ENCODE measurements at regions of chr16 and their contacts with region 1.

Region 1: DNA sequence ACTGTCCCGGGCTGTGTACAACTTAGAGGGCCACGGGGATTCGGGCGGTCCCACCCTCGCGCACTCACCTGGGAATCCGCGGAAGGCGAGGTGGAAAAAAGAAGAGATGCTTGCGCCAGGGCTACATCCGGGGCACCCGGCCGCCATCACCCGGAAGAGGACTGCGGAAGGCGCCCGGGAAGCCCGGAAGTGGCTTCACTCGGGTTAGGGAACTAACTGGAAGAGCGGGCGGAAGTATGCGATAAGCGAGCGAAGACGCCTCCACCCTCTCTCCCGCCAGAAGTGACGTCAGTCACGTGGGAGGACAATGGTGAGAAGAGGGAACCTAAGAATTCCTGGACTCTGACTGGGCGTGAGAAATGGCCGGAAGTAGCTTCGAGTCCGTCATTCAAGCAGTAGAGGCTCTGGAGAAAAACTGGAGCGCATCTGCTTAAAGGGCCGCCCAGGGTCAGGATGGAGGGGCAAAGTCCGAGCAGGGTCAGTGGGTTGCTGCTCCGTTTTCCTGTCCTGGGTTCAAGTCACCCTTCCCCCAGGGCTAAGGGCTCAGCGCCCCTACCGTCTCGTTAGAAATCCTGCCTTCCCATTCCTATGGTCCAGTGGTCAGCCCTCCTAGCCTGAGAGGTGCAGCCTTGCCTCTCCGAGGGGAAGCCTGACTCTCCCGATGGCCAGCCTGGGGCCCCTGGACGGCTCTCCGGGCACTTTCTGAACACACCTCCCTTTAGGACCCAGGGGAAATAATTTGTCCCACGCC is at the start of gene CD2BP2:
- DNase-seq: peak; percentile 75 to 91 (median 86)
- ATAC-seq: peak; percentile 92
- H3K4me3 ChIP-seq: peak within 1 kb of the TSS; percentile 82
- H3K4me3 Mint-ChIP-seq: peak within 1 kb of the TSS; percentile 90 to 100 (median 96)
- H3K27ac ChIP-seq: peak within 1 kb of the TSS; percentile 92
- H3K27ac Mint-ChIP-seq: peak within 1 kb of the TSS; percentile 95 to 99 (median 98)
- H3K4me1 ChIP-seq: peaks cover 16 to 18% of the 10 kb centered on the region in 2 donors
- H3K4me1 Mint-ChIP-seq: peaks cover 10 to 46% (median 28%) of the 10 kb centered on the region in 7 donors
- H3K27me3 ChIP-seq: no peaks in the 10 kb centered on the region
- H3K27me3 Mint-ChIP-seq: peaks cover 0 to 2% (median 0%) of the 10 kb centered on the region in 5 donors
- total RNA-seq, gene CD2BP2: 37.5 to 77.0 (median 64.6) TPM

Region 2: GRCh38 chr16:30335598-30336474 is 19.5 kb before region 1 on chr16:
- CTCF ChIA-PET with region 1: interaction called, 3 read pairs
- POLR2A ChIA-PET with region 1: interaction called, 7 read pairs
- intact Hi-C with region 1: loop called (anchors 1 kb)
- DNase-seq: peak in 1 of 9 donors; percentile 26
- ATAC-seq: no peak
- H3K4me3 ChIP-seq: peak overlapping the region; percentile 50
- H3K4me3 Mint-ChIP-seq: peak overlapping the region; percentile 80 to 96 (median 87)
- H3K27ac ChIP-seq: peak overlapping the region; percentile 74
- H3K27ac Mint-ChIP-seq: peak overlapping the region; percentile 57 to 91 (median 81)
- H3K4me1 ChIP-seq: peaks cover 7% of the 10 kb centered on the region in 2 donors
- H3K4me1 Mint-ChIP-seq: peaks cover 3 to 30% (median 17%) of the 10 kb centered on the region in 7 donors
- H3K27me3 ChIP-seq: no peaks in the 10 kb centered on the region
- H3K27me3 Mint-ChIP-seq: no peaks in the 10 kb centered on the region

Region 3: DNA sequence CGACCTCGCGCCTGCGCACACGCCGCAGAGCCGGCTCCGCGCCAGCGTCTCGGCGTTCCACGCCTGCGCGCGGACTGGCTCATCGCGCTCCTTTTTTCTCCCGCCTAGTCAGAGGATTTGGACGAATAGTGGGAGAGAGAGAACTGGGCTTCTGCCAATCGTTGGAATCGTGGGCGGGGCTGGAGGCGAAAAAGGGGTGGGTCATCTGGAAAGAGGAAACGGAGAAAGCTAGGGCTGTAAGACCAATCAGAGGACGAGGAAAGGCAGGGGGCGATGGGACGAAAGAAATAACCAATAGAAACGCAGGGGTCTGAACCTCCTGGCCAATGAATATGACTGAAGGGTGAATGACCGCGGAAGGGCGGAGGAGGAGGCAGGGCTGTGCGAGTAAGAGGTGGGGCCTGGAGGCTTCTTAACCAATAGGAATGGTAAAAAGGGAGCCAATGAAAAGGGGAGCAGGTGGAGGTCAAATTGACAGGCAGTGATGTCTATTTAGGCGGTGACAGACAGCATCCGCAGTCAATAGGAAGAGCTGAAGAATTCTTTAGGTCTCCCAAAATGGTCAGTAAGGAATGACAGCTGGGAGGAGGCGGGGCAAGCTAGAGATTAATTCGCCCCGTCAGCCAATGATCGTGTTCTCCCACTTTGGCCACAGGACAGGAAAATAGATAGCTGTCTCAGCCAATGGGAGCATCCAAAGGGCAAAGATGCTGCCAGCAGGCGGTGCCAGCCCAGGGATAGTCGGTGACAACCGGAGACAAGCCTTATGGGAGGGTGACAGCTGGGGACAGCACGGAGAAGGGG is 15.3 kb after region 1 on chr16 and contains the start of gene TBC1D10B:
- CTCF ChIA-PET with region 1: interaction called, 3 read pairs
- POLR2A ChIA-PET with region 1: interaction called, 22 read pairs
- intact Hi-C with region 1: loop called in 1 of 2 experiments (anchors 1 kb)
- DNase-seq: peak; percentile 89 to 100 (median 100)
- ATAC-seq: peak; percentile 91
- H3K4me3 ChIP-seq: peak within 1 kb of the TSS; percentile 76
- H3K4me3 Mint-ChIP-seq: peak within 1 kb of the TSS; percentile 83 to 92 (median 89)
- H3K27ac ChIP-seq: peak within 1 kb of the TSS; percentile 80
- H3K27ac Mint-ChIP-seq: peak within 1 kb of the TSS; percentile 63 to 98 (median 93)
- H3K4me1 ChIP-seq: peaks cover 24 to 25% of the 10 kb centered on the region in 2 donors
- H3K4me1 Mint-ChIP-seq: peaks cover 42 to 54% (median 50%) of the 10 kb centered on the region in 7 donors
- H3K27me3 ChIP-seq: no peaks in the 10 kb centered on the region
- H3K27me3 Mint-ChIP-seq: peaks cover 0 to 3% (median 0%) of the 10 kb centered on the region in 5 donors
- total RNA-seq, gene TBC1D10B: 23.2 to 70.0 (median 45.2) TPM

Region 4: GRCh38 chr16:30378236-30379204 is 23.2 kb after region 1 on chr16:
- CTCF ChIA-PET with region 1: no interaction called
- POLR2A ChIA-PET with region 1: interaction called, 10 read pairs
- intact Hi-C with region 1: loop called (anchors 1 to 2 kb)
- DNase-seq: peak; percentile 97 to 99 (median 99)
- ATAC-seq: peak; percentile 91
- H3K4me3 ChIP-seq: peak overlapping the region; percentile 88
- H3K4me3 Mint-ChIP-seq: peak overlapping the region; percentile 90 to 100 (median 97)
- H3K27ac ChIP-seq: peak overlapping the region; percentile 100
- H3K27ac Mint-ChIP-seq: peak overlapping the region; percentile 98 to 100 (median 100)
- H3K4me1 ChIP-seq: peaks cover 54 to 56% of the 10 kb centered on the region in 2 donors
- H3K4me1 Mint-ChIP-seq: peaks cover 32 to 61% (median 49%) of the 10 kb centered on the region in 7 donors
- H3K27me3 ChIP-seq: no peaks in the 10 kb centered on the region
- H3K27me3 Mint-ChIP-seq: no peaks in the 10 kb centered on the region

Measured in naive thymus-derived CD4-positive, alpha-beta T cell (primary cell).